Activated CD4-positive, alpha-beta memory T cell treated with anti-CD3 and anti-CD28 coated beads, Interleukin-2, amount 10 ng/mL, durations not matched to agents 7 days and 5 days (primary cell): ENCODE measurements at regions of chr2 and their contacts with region 1.

Region 1: GRCh38 chr2:54657664-54658083 is 65.8 kb upstream of the EML6 start:
- DNase-seq: peak; percentile 46
- H3K4me3 Mint-ChIP-seq: no peak overlapping the region
- H3K27ac Mint-ChIP-seq: peak overlapping the region; percentile 30
- H3K4me1 Mint-ChIP-seq: peaks cover 25% of the 10 kb centered on the region
- H3K27me3 Mint-ChIP-seq: no peaks in the 10 kb centered on the region

Region 2: GRCh38 chr2:54522624-54523281 is 134.9 kb before region 1 on chr2:
- CTCF ChIA-PET with region 1: interaction called, 11 read pairs
- POLR2A ChIA-PET with region 1: no interaction called
- DNase-seq: peak; percentile 64
- H3K4me3 Mint-ChIP-seq: no peak overlapping the region
- H3K27ac Mint-ChIP-seq: peak overlapping the region; percentile 33
- H3K4me1 Mint-ChIP-seq: peaks cover 17% of the 10 kb centered on the region
- H3K27me3 Mint-ChIP-seq: peaks cover 17% of the 10 kb centered on the region

Region 3: GRCh38 chr2:55090702-55091101 is 433.0 kb after region 1 on chr2:
- CTCF ChIA-PET with region 1: no interaction called
- POLR2A ChIA-PET with region 1: no interaction called
- DNase-seq: no peak
- H3K4me3 Mint-ChIP-seq: no peak overlapping the region
- H3K27ac Mint-ChIP-seq: no peak overlapping the region
- H3K4me1 Mint-ChIP-seq: peaks cover 10% of the 10 kb centered on the region
- H3K27me3 Mint-ChIP-seq: no peaks in the 10 kb centered on the region